ENCODE measurements at regions of chr22 and their contacts with region 1.

Region 1: DNA sequence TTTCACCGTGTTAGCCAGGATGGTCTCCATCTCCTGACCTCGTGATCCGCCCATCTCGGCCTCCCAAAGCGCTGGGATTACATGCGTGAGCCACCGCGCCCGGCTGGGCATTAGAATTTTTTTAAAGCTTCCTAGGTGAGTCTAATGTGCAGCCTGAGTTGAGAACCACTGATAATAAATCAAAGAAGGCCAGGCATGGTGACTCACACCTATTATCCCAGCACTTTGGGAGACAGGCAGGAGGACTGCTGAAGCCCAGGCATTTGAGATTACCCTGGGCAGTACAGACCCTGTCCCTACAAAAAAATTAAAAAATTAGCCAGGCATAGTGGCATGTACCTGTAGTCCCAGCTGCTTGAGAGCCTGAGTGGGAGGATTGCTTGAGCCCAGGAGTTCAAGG is 13.7 kb downstream of the MEI1 start:
- DNase-seq: peak; percentile 21
- ATAC-seq: peak; percentile 45; the same call in 1 of the 2 replicates
- H3K4me3 ChIP-seq: no peak overlapping the region
- H3K27ac ChIP-seq: no peak overlapping the region
- H3K4me1 ChIP-seq: no peaks in the 10 kb centered on the region
- H3K27me3 ChIP-seq: no peaks in the 10 kb centered on the region
- CTCF ChIP-seq: no peak

Region 2: DNA sequence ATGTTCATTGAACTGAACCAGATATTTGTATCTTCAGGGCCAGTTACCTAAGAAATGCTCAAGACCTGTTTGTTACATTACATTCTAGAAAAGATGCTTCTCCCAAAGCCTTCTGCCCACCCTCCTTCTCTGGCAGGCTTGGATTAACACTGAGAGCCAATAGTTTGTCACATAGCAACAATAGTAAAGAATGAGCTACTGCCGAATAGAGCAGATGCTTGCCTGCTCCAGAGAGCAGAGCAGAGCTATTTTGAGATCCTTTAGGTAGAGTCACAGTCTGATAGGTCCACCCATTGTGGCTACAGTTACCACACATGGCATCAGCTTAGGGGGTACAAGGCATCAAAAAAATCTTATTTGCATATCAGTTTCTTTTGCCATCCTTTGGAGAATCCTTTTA is 634.1 kb before region 1 on chr22:
- CTCF ChIA-PET with region 1: no interaction called
- POLR2A ChIA-PET with region 1: no interaction called
- intact Hi-C with region 1: no loop called
- DNase-seq: no peak
- ATAC-seq: no peak
- H3K4me3 ChIP-seq: no peak overlapping the region
- H3K27ac ChIP-seq: no peak overlapping the region
- H3K4me1 ChIP-seq: no peaks in the 10 kb centered on the region
- H3K27me3 ChIP-seq: no peaks in the 10 kb centered on the region
- CTCF ChIP-seq: no peak

Region 3: GRCh38 chr22:41725510-41726110 is 12.6 kb after region 1 on chr22:
- CTCF ChIA-PET with region 1: no interaction called
- POLR2A ChIA-PET with region 1: no interaction called
- intact Hi-C with region 1: no loop called
- DNase-seq: peak; percentile 15
- ATAC-seq: 0 out of 2 replicates have a peak, but pooled peaks have one; percentile 20
- H3K4me3 ChIP-seq: no peak overlapping the region
- H3K27ac ChIP-seq: no peak overlapping the region
- H3K4me1 ChIP-seq: no peaks in the 10 kb centered on the region
- H3K27me3 ChIP-seq: no peaks in the 10 kb centered on the region
- CTCF ChIP-seq: no peak

Region 4: DNA sequence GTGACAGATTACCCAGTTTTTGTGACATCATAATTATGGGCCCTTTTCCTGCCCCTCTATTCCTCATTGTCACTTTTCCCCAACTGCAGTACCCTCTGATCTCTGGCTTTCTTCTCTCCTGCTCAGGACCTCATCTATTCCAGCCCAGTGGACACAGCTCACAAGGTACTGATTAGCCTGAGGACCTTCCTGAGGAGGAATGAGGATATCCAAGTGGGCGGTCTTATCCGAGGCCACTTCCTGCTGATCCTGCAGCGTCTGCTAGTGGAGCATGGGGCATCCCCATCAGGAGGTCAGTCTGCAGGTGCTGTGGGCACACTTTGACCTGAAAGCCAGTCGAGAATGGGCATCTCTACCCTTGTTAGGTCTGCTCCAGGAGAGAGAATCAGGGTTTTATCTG is 63.0 kb after region 1 on chr22:
- CTCF ChIA-PET with region 1: no interaction called
- POLR2A ChIA-PET with region 1: interaction called, 17 read pairs
- intact Hi-C with region 1: no loop called
- DNase-seq: no peak
- ATAC-seq: no peak
- H3K4me3 ChIP-seq: no peak overlapping the region
- H3K27ac ChIP-seq: no peak overlapping the region
- H3K4me1 ChIP-seq: peaks cover 10% of the 10 kb centered on the region
- H3K27me3 ChIP-seq: no peaks in the 10 kb centered on the region
- CTCF ChIP-seq: no peak

Measured in PC-3 (cell line).